ENCODE measurements at regions of chr1 and their contacts with region 1.

Region 1: GRCh38 chr1:16440470-16441281 is at the start of gene NECAP2:
- DNase-seq: peak; percentile 96
- ATAC-seq: peak; percentile 92
- H3K4me3 Mint-ChIP-seq: peak within 1 kb of the TSS; percentile 88
- H3K27ac Mint-ChIP-seq: peak within 1 kb of the TSS; percentile 86
- H3K4me1 Mint-ChIP-seq: peaks cover 33% of the 10 kb centered on the region
- H3K27me3 Mint-ChIP-seq: no peaks in the 10 kb centered on the region
- CTCF ChIP-seq: peak; percentile 93
- total RNA-seq, gene NECAP2: 53.1 to 54.7 TPM

Region 2: GRCh38 chr1:16375521-16376359 is 64.9 kb before region 1 on chr1:
- CTCF ChIA-PET with region 1: interaction called, 11 read pairs
- POLR2A ChIA-PET with region 1: interaction called, 3 read pairs
- intact Hi-C with region 1: no loop called
- DNase-seq: no peak
- ATAC-seq: no peak
- H3K4me3 Mint-ChIP-seq: no peak overlapping the region
- H3K27ac Mint-ChIP-seq: peak overlapping the region; percentile 75
- H3K4me1 Mint-ChIP-seq: peaks cover 70% of the 10 kb centered on the region
- H3K27me3 Mint-ChIP-seq: no peaks in the 10 kb centered on the region
- CTCF ChIP-seq: no peak

Region 3: GRCh38 chr1:16420424-16421118 is 20.1 kb before region 1 on chr1:
- CTCF ChIA-PET with region 1: interaction called, 20 read pairs
- POLR2A ChIA-PET with region 1: interaction called, 8 read pairs
- intact Hi-C with region 1: no loop called
- DNase-seq: peak; percentile 92
- ATAC-seq: peak; percentile 96
- H3K4me3 Mint-ChIP-seq: peak overlapping the region; percentile 34
- H3K27ac Mint-ChIP-seq: peak overlapping the region; percentile 92
- H3K4me1 Mint-ChIP-seq: peaks cover 33% of the 10 kb centered on the region
- H3K27me3 Mint-ChIP-seq: no peaks in the 10 kb centered on the region
- CTCF ChIP-seq: no peak

Region 4: GRCh38 chr1:16459352-16459925 is 18.8 kb after region 1 on chr1:
- CTCF ChIA-PET with region 1: interaction called, 10 read pairs
- POLR2A ChIA-PET with region 1: interaction called, 11 read pairs
- intact Hi-C with region 1: no loop called
- DNase-seq: no peak
- ATAC-seq: no peak
- H3K4me3 Mint-ChIP-seq: no peak overlapping the region
- H3K27ac Mint-ChIP-seq: no peak overlapping the region
- H3K4me1 Mint-ChIP-seq: no peaks in the 10 kb centered on the region
- H3K27me3 Mint-ChIP-seq: no peaks in the 10 kb centered on the region
- CTCF ChIP-seq: no peak

Region 5: DNA sequence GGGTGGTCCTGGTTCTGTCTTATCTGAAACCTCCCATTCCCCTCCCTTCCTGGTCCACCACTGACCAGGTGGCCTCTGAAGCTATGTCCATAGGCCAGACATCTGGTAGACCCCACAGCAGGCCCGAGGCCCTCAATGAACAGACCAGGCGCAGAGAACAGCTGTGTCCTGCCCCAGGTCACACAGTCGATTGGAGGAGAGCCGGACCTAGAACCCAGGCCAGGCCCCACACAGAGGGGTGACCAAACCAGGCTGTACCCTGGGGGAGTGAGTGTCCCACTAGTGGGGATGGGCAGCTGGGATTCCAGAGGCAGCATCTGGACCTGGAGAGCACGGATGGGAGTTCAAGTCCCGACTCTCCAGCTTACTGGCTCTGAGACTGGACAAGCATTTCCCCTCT is 44.3 kb after region 1 on chr1:
- CTCF ChIA-PET with region 1: no interaction called
- POLR2A ChIA-PET with region 1: no interaction called
- intact Hi-C with region 1: no loop called
- DNase-seq: no peak
- ATAC-seq: no peak
- H3K4me3 Mint-ChIP-seq: no peak overlapping the region
- H3K27ac Mint-ChIP-seq: no peak overlapping the region
- H3K4me1 Mint-ChIP-seq: no peaks in the 10 kb centered on the region
- H3K27me3 Mint-ChIP-seq: no peaks in the 10 kb centered on the region
- CTCF ChIP-seq: no peak